Activated CD4-positive, alpha-beta T cell treated with anti-CD3 and anti-CD28 coated beads, Interleukin-2, amount 10 ng/mL, durations not matched to agents 24 days and 14 days (primary cell): ENCODE measurements at regions of chrX and their contacts with region 1.

Region 1: DNA sequence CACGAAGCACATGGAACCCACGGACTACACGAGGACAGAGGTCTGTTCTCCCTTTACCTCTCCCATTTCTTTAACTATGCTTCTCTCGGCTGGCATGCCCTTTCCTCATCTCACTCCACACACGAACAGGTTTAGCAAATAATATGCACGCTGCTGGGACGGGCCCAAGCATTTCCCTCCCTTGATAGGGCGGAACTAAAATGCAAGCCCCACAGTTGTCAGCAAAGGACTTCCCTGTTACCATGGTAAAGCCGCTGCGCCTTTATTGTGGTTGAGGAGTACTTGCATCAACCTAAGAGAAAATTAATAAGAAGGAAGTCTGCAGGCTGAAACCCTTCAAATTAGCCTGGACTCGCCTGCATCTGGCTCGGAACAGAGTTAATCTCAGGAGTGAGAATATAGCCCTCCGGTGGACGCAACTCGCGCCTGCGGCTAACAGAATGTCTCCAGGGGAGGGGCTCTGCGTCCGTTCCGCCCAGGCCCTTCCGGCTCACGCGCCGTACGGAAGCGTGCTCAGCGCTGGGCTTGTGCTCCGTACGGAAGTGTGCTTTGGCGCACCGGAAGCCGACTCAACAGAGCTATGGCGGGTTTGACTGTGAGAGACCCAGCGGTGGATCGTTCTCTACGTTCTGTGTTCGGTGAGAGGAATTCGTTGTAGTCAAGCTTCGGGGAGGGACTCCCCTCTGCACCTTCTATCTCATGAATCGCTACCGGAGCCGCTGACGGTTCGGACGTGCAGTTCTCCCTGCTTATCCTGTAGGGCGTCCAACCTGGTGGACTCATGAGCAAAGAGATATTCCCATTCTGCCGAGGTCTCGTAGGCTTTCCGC is at the start of gene CSTF2:
- DNase-seq: peak; percentile 93
- H3K4me3 Mint-ChIP-seq: peak within 1 kb of the TSS; percentile 88
- H3K27ac Mint-ChIP-seq: peak within 1 kb of the TSS; percentile 94
- H3K4me1 Mint-ChIP-seq: peaks cover 8% of the 10 kb centered on the region
- H3K27me3 Mint-ChIP-seq: peaks cover 2% of the 10 kb centered on the region
- total RNA-seq, gene CSTF2: 71.4 and 73.6 TPM in 2 replicates

Region 2: GRCh38 chrX:100994352-100995281 is 174.6 kb after region 1 on chrX:
- intact Hi-C with region 1: loop called (anchors 10 kb)
- DNase-seq: peak; percentile 57
- H3K4me3 Mint-ChIP-seq: peak overlapping the region; percentile 55
- H3K27ac Mint-ChIP-seq: peak overlapping the region; percentile 86
- H3K4me1 Mint-ChIP-seq: peaks cover 17% of the 10 kb centered on the region
- H3K27me3 Mint-ChIP-seq: no peaks in the 10 kb centered on the region

Region 3: DNA sequence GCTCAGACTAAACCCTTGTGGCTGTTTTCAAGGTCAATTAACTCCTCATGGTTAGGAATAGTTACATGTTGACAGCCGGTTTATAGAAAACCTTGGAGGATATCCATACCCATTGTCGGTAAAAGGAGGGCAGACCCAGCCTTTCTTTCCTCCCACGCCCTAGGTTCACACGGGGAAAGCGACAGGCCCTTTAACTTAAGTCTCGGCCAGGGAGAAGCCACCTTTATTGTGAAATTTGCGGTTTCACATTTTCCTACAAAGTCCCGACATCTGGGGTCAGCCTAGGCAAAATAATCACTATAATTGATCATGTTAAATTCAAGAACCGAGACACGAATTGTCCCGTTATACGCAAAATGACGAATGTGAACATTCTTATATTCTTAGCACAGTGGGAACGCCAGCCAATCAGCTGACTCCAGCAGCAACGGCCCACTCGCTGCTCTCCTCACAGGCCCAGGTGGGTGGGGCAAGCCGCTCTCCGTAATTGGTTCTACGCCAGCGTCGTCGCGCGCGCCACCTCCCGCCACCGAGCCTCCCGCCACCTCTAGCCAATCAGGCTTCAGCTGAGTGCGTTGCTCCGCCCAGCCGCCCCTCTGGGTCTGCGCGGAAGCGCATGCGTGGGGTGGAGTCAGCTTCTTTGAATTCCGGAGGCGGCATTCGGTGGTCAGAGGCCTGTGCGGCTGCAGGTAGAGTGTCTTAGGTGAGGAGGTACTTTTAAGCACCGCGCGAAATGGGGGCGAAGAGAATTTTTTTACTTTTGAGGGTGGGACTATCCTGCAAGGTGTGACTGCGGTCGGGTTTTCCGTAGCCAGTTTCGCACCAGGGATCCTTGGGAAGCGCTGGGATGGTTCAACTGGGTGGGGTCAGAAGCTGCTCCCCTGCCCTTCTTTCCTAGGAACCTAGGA is 277.7 kb after region 1 on chrX and contains the start of gene CENPI:
- intact Hi-C with region 1: loop called (anchors 1 kb)
- DNase-seq: peak; percentile 98
- H3K4me3 Mint-ChIP-seq: peak within 1 kb of the TSS; percentile 96
- H3K27ac Mint-ChIP-seq: peak within 1 kb of the TSS; percentile 89
- H3K4me1 Mint-ChIP-seq: peaks cover 24% of the 10 kb centered on the region
- H3K27me3 Mint-ChIP-seq: no peaks in the 10 kb centered on the region
- total RNA-seq, gene CENPI: 14.9 and 19.4 TPM in 2 replicates

Region 4: GRCh38 chrX:101206471-101206870 is 386.4 kb after region 1 on chrX:
- intact Hi-C with region 1: loop called (anchors 10 kb)
- DNase-seq: peak; percentile 56
- H3K4me3 Mint-ChIP-seq: no peak overlapping the region
- H3K27ac Mint-ChIP-seq: no peak overlapping the region
- H3K4me1 Mint-ChIP-seq: peaks cover 11% of the 10 kb centered on the region
- H3K27me3 Mint-ChIP-seq: no peaks in the 10 kb centered on the region

Region 5: DNA sequence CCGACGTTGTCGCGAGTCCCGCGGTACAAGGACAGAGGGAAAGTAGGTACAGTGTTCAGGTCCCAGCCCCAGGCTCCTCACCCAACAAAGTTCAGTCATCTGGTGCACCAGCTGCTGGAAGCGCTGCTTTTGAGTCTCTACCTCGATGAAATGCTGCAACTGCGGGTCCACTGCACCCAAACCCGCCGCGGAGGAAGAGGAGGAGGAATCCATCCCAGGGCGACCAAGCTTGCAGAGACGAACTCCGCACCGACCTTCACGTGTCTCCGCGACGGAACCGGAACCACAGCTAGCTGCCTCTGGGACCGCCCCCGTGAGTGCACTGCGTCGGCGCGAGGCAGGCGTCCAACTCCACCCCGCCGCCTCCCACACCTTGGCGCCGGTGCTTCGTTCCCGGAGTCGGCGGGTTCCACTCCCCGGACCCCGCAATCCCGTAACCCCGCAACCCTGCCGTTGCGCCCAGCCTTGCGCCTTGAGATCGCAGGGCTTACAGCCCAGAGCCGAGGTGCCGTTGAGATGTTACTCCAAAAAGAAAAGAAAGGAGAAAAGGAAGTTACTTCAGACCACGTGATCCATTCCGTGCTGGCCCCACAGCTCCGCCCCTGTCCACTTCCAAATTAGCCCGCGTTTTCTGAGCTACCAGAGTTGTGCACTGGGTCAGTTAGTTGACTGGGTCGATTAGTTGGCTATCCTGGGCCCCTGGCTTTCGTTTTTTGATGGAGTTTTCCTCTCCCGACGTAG is 528.6 kb after region 1 on chrX and contains the start of gene TIMM8A:
- intact Hi-C with region 1: loop called (anchors 5 kb)
- DNase-seq: peak; percentile 94
- H3K4me3 Mint-ChIP-seq: peak within 1 kb of the TSS; percentile 92
- H3K27ac Mint-ChIP-seq: peak within 1 kb of the TSS; percentile 93
- H3K4me1 Mint-ChIP-seq: peaks cover 2% of the 10 kb centered on the region
- H3K27me3 Mint-ChIP-seq: no peaks in the 10 kb centered on the region
- total RNA-seq, gene TIMM8A: 28.3 and 32.8 TPM in 2 replicates

Region 6: DNA sequence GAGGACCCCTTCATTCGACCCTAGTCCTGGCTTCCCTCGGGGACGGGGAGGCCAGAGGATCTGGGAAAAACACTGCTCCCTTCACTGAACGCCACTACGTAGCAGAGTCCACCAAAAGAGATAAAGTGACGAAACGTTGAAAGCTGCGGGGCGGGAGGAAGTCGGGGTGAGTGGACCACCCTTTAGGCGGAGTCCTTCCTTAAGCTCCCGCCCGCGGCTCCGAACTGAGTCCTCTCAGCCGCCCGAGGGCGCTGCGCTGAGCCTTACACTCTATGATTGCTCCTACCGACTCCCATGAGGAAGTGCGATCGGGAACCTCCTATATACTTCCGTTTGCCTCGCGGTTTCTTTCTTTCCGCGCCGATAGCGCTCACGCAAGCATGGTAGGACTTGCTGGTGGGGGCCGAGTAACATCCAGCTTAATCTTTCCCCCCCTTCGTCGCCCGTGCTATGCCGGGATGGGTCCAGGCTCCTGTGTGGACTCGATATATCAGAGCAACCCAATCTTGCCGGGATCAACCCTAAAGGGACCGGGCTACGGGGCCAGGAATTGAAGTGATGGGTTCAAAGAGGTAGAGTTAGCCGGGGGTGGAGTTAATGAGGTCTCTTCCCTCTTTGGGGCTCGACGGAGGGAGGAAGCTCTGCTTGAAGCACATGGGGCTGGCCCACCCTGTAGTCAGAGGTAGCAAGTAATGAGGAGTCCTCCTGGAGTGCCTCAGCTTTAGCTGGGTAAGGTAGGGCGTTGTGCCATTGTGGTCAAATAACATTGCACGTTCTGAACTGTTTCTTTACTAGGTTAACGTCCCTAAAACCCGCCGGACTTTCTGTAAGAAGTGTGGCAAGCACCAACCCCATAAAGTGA is 570.8 kb after region 1 on chrX and contains the start of gene RPL36A:
- intact Hi-C with region 1: loop called (anchors 5 kb)
- DNase-seq: peak; percentile 94
- H3K4me3 Mint-ChIP-seq: peak within 1 kb of the TSS; percentile 97
- H3K27ac Mint-ChIP-seq: peak within 1 kb of the TSS; percentile 98
- H3K4me1 Mint-ChIP-seq: peaks cover 10% of the 10 kb centered on the region
- H3K27me3 Mint-ChIP-seq: no peaks in the 10 kb centered on the region
- total RNA-seq, gene RPL36A: 252 and 278 TPM in 2 replicates